ENCODE measurements at regions of chr11 and their contacts with region 1.

Region 1: GRCh38 chr11:134098566-134099184 is 29.8 kb downstream of the JAM3 start:
- DNase-seq: peak; percentile 14
- H3K4me3 Mint-ChIP-seq: no peak overlapping the region
- H3K27ac Mint-ChIP-seq: no peak overlapping the region
- H3K4me1 Mint-ChIP-seq: no peaks in the 10 kb centered on the region
- H3K27me3 Mint-ChIP-seq: peaks cover 23% of the 10 kb centered on the region
- CTCF ChIP-seq: peak; percentile 41

Region 2: GRCh38 chr11:133917921-133918605 is 180.6 kb before region 1 on chr11:
- CTCF ChIA-PET with region 1: interaction called, 10 read pairs
- POLR2A ChIA-PET with region 1: no interaction called
- intact Hi-C with region 1: no loop called
- DNase-seq: no peak
- H3K4me3 Mint-ChIP-seq: no peak overlapping the region
- H3K27ac Mint-ChIP-seq: no peak overlapping the region
- H3K4me1 Mint-ChIP-seq: no peaks in the 10 kb centered on the region
- H3K27me3 Mint-ChIP-seq: no peaks in the 10 kb centered on the region
- CTCF ChIP-seq: no peak

Region 3: DNA sequence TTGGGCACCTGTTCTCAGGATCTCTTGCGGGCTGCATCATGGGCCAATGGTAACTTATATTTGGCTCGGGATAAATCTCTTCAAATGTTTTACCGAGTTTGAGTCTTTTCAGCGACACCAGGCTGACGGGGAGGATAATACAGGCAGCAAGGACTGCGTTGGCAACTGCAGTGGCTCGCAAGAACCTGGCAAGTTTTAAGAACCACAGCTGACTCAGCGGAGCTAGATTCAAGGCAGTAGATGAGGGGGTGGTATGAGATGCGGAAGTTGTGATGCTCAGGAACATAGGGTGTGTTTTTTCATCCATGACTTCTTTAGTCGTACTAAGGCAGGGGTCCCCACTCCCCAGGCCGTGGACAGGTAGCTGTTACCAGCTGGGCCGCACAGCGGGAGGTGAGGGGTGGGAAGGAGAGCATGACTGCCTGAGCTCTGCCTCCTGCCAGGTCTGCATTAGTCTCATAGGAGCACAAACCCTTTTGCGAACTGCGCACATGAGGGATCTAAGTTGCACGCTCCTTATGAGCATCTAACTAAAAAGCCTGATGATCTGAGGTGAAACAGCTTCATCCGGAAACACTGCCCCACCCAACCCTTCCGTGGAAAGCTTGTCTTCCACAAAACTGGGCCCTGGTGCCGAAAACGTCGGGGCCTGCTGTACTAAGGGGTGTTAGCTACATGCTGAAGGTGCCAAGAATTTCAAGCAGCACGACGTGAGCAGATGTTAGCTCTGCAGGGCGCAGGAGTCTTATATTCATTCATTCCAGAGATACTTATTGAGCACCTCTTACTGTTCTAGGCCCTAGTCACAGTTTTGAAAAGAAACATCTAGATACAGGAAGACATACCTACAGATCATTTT is 36.2 kb before region 1 on chr11:
- CTCF ChIA-PET with region 1: interaction called, 12 read pairs
- POLR2A ChIA-PET with region 1: interaction called, 4 read pairs
- intact Hi-C with region 1: no loop called
- DNase-seq: no peak
- H3K4me3 Mint-ChIP-seq: no peak overlapping the region
- H3K27ac Mint-ChIP-seq: no peak overlapping the region
- H3K4me1 Mint-ChIP-seq: no peaks in the 10 kb centered on the region
- H3K27me3 Mint-ChIP-seq: peaks cover 17% of the 10 kb centered on the region
- CTCF ChIP-seq: no peak

Region 4: GRCh38 chr11:134069426-134070341 is 29.0 kb before region 1 on chr11:
- CTCF ChIA-PET with region 1: interaction called, 18 read pairs
- POLR2A ChIA-PET with region 1: no interaction called
- intact Hi-C with region 1: no loop called
- DNase-seq: no peak
- H3K4me3 Mint-ChIP-seq: no peak overlapping the region
- H3K27ac Mint-ChIP-seq: no peak overlapping the region
- H3K4me1 Mint-ChIP-seq: no peaks in the 10 kb centered on the region
- H3K27me3 Mint-ChIP-seq: peaks cover 46% of the 10 kb centered on the region
- CTCF ChIP-seq: no peak

Region 5: DNA sequence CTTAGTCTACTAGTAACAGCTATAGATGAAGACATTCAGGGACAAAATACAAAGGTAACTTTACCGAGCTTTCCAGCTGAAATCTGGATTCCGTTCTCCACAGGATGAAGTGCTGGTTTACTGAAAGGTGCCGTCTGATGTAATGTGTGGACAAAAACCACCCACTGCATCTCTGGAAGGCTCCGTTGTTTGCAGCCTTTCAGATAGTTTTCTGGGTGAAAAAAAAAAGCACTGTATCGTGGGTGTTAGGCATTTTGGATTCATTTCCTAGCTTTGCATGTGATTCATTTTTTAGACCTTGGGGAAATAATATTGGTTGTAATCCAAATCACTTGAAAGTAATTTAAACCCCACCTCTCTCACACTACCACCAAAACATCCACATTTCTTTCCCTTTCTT is 19.4 kb before region 1 on chr11:
- CTCF ChIA-PET with region 1: interaction called, 29 read pairs
- POLR2A ChIA-PET with region 1: interaction called, 3 read pairs
- intact Hi-C with region 1: no loop called
- DNase-seq: no peak
- H3K4me3 Mint-ChIP-seq: no peak overlapping the region
- H3K27ac Mint-ChIP-seq: no peak overlapping the region
- H3K4me1 Mint-ChIP-seq: no peaks in the 10 kb centered on the region
- H3K27me3 Mint-ChIP-seq: peaks cover 27% of the 10 kb centered on the region
- CTCF ChIP-seq: no peak

Region 6: GRCh38 chr11:134139873-134140331 is 41.2 kb after region 1 on chr11:
- CTCF ChIA-PET with region 1: interaction called, 47 read pairs
- POLR2A ChIA-PET with region 1: interaction called, 3 read pairs
- intact Hi-C with region 1: no loop called
- DNase-seq: peak; percentile 75
- H3K4me3 Mint-ChIP-seq: no peak overlapping the region
- H3K27ac Mint-ChIP-seq: no peak overlapping the region
- H3K4me1 Mint-ChIP-seq: peaks cover 3% of the 10 kb centered on the region
- H3K27me3 Mint-ChIP-seq: peaks cover 20% of the 10 kb centered on the region
- CTCF ChIP-seq: peak; percentile 85